ENCODE measurements at regions of chr5 and their contacts with region 1.

Region 1: GRCh38 chr5:180291943-180292831 is at the start of gene MAPK9:
- DNase-seq: peak; percentile 82 to 92 (median 86)
- ATAC-seq: peak; percentile 85
- H3K4me3 ChIP-seq: peak within 1 kb of the TSS; percentile 79
- H3K4me3 Mint-ChIP-seq: peak within 1 kb of the TSS; percentile 90 to 100 (median 98)
- H3K27ac ChIP-seq: peak within 1 kb of the TSS; percentile 96
- H3K27ac Mint-ChIP-seq: peak within 1 kb of the TSS; percentile 96 to 100 (median 99)
- H3K4me1 ChIP-seq: peaks cover 15 to 17% of the 10 kb centered on the region in 2 donors
- H3K4me1 Mint-ChIP-seq: peaks cover 31 to 75% (median 58%) of the 10 kb centered on the region in 7 donors
- H3K27me3 ChIP-seq: no peaks in the 10 kb centered on the region
- H3K27me3 Mint-ChIP-seq: no peaks in the 10 kb centered on the region
- total RNA-seq, gene MAPK9: 25.7 to 41.4 (median 31.2) TPM

Region 2: DNA sequence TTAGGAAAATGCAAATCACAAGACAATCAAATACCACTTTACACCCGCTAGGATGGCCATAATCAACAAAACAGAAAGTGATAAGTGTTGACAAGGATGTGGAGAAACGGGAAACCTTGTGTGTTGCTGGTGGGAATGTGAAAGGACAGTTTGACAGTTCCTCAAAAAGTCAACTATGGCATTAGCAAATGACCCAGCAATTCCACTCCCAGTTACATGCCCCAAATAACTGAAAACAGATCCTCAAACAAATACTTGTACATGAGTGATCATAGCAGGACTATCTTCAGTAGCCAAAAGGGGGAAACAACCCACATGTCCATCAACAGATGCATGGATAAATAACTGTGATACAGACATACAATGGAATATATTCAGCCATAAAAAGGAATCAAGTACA is 104.4 kb before region 1 on chr5:
- CTCF ChIA-PET with region 1: no interaction called
- POLR2A ChIA-PET with region 1: no interaction called
- intact Hi-C with region 1: no loop called
- DNase-seq: no peak
- ATAC-seq: no peak
- H3K4me3 ChIP-seq: no peak overlapping the region
- H3K4me3 Mint-ChIP-seq: no peak overlapping the region
- H3K27ac ChIP-seq: no peak overlapping the region
- H3K27ac Mint-ChIP-seq: no peak overlapping the region
- H3K4me1 ChIP-seq: no peaks in the 10 kb centered on the region
- H3K4me1 Mint-ChIP-seq: no peaks in the 10 kb centered on the region
- H3K27me3 ChIP-seq: no peaks in the 10 kb centered on the region
- H3K27me3 Mint-ChIP-seq: peaks cover 0 to 30% (median 12%) of the 10 kb centered on the region in 5 donors

Region 3: DNA sequence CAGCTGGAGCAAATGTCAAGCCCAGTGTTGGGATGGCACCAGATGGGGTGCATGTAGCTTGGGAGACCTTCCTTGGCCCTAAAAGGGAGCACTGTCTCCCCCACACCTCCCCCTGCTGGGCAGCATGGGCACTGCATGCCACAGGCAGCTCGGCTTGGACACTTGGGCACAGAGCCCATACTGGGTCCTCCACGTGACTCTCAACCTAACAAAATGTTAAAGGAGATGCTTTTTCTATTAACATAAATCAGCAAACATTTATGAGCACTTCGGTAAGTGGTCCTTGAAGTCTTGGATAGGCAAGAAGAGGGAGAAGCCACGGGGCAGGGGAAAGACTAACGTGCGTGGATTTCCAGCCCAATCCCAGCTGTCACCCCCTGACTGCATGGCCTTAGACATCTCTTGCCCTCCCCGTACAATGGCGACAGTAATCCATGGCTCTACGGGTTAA is 23.6 kb after region 1 on chr5:
- CTCF ChIA-PET with region 1: interaction called, 72 read pairs
- POLR2A ChIA-PET with region 1: interaction called, 39 read pairs
- intact Hi-C with region 1: loop called (anchors 1 kb)
- DNase-seq: peak; percentile 52 to 79 (median 66)
- ATAC-seq: peak; percentile 96
- H3K4me3 ChIP-seq: no peak overlapping the region
- H3K4me3 Mint-ChIP-seq: peak overlapping the region in 1 of 10 donors; percentile 30
- H3K27ac ChIP-seq: no peak overlapping the region
- H3K27ac Mint-ChIP-seq: no peak overlapping the region
- H3K4me1 ChIP-seq: no peaks in the 10 kb centered on the region
- H3K4me1 Mint-ChIP-seq: peaks cover 0 to 8% (median 0%) of the 10 kb centered on the region in 7 donors
- H3K27me3 ChIP-seq: no peaks in the 10 kb centered on the region
- H3K27me3 Mint-ChIP-seq: no peaks in the 10 kb centered on the region

Region 4: DNA sequence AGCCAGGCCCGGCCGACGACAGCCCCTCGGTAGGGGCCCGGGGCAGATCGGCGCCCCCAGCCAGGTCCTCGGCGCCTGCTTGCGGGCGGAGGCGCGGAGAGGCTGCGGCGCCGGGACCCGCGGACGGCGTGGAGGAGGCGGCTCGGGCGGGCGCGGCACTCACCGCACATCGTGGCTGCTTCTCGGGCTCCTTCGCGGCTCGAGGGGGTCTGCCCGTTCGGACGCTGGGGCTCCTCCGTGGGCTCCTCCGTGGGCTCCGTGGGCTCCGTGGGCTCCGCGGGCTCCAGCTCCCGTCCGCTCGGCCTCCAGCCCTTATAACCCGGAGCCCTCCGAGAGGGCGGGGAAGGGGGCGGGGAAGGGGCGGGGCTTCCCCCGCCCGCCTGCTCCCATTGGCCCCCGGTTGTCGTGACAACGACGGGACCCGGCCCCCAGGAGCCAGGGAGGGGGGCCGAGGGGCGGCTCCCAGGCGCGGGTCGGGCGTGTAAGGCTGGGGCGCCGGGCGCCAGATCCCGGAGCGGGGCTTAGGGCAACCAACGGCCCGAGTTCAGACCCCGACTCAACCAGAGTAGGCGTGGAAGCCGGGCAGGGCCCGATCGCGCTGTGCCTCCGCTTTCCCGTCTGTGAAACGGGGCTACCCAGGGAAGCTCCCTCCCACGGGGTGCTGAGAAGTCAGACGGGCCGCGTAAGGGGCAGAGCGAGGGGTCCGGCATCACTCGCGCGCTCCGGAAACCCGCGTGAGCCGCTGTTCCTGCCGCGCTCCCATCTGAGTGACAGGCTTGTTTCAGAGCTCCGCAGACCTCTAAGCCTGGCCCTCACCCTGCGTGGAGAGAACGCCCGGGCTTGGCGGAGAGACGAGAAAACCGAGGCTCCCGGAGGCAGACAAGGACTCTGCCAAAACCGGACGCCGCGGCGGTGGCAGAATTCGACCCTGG is 61.1 kb after region 1 on chr5 and contains the start of gene GFPT2:
- CTCF ChIA-PET with region 1: no interaction called
- POLR2A ChIA-PET with region 1: no interaction called
- intact Hi-C with region 1: loop called (anchors 1 kb)
- DNase-seq: peak; percentile 52 to 75 (median 65)
- ATAC-seq: peak; percentile 95
- H3K4me3 ChIP-seq: peak within 1 kb of the TSS; percentile 75
- H3K4me3 Mint-ChIP-seq: peak within 1 kb of the TSS; percentile 66 to 84 (median 77)
- H3K27ac ChIP-seq: no peak within 1 kb of the TSS
- H3K27ac Mint-ChIP-seq: no peak within 1 kb of the TSS
- H3K4me1 ChIP-seq: peaks cover 5% of the 10 kb centered on the region in 2 donors
- H3K4me1 Mint-ChIP-seq: peaks cover 0 to 12% (median 6%) of the 10 kb centered on the region in 7 donors
- H3K27me3 ChIP-seq: peaks cover 0 to 13% of the 10 kb centered on the region in 2 donors
- H3K27me3 Mint-ChIP-seq: peaks cover 33 to 62% (median 45%) of the 10 kb centered on the region in 5 donors
- total RNA-seq, gene GFPT2: 0.16 to 0.81 TPM in 2 of 5 experiments, not detected in the others

Region 5: GRCh38 chr5:180494060-180494509 is 201.9 kb after region 1 on chr5 and contains the start of gene CNOT6:
- CTCF ChIA-PET with region 1: no interaction called
- POLR2A ChIA-PET with region 1: no interaction called
- intact Hi-C with region 1: loop called (anchors 1 kb)
- DNase-seq: peak; percentile 91 to 98 (median 95)
- ATAC-seq: peak; percentile 98
- H3K4me3 ChIP-seq: peak within 1 kb of the TSS; percentile 83
- H3K4me3 Mint-ChIP-seq: peak within 1 kb of the TSS; percentile 85 to 99 (median 96)
- H3K27ac ChIP-seq: peak within 1 kb of the TSS; percentile 98
- H3K27ac Mint-ChIP-seq: peak within 1 kb of the TSS; percentile 84 to 98 (median 95)
- H3K4me1 ChIP-seq: peaks cover 10 to 27% of the 10 kb centered on the region in 2 donors
- H3K4me1 Mint-ChIP-seq: peaks cover 29 to 42% (median 35%) of the 10 kb centered on the region in 7 donors
- H3K27me3 ChIP-seq: no peaks in the 10 kb centered on the region
- H3K27me3 Mint-ChIP-seq: no peaks in the 10 kb centered on the region
- total RNA-seq, gene CNOT6: 22.8 to 41.9 (median 30.0) TPM